Activated CD8-positive, alpha-beta T cell treated with anti-CD3 and anti-CD28 coated beads, Interleukin-2, amount 10 ng/mL, durations not matched to agents 7 days and 5 days (primary cell): ENCODE measurements at regions of chr7 and their contacts with region 1.

Region 1: GRCh38 chr7:2709553-2710285 is 21.7 kb downstream of the AMZ1 start:
- DNase-seq: peak; percentile 88
- ATAC-seq: peak; percentile 91
- H3K4me3 Mint-ChIP-seq: peak overlapping the region; percentile 51
- H3K27ac Mint-ChIP-seq: peak overlapping the region; percentile 63
- H3K4me1 Mint-ChIP-seq: peaks cover 41% of the 10 kb centered on the region
- H3K27me3 Mint-ChIP-seq: peaks cover 29% of the 10 kb centered on the region

Region 2: DNA sequence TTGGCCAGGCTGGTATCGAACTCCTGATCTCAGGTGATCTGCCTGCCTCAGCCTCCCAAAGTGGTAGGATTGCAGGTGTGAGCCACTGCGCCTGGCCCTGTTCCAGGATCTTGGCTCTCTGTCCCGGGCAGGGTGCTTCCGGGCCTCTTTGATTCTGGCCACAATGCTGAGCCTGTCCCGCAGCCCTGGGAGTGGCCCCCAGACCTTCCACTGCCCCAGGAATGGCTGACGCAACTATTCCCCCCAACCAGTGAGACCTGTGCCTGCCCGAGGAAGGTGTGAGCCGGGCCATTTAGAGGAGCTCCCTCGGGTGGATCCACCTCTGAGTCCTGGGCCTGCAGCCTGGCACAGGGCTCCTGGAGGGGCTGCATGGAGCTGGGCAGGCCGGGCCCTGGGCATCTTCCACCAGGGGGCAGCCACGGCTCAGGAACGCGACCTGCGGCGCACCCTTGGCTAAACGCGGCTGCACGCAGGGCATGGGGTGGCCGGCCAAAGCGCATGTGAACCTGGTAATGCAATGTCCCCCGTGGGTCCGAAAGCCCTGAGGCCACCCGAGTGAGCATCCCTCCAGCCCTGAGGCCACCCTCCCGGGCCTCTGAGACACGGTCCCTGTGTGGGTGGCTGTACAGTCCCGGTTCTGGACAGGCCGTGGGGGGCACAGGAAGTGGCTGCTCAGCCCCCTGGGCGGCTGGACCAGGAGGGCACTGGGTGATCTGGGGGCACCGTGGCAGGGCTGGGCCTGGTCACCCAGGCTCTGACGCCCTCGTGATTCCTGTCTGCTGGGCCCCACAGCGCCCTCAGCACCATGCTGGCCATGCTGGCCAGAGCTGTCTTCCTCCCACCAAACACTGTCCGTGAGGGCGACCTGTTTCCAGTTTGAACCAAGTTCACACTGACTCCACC is 258.3 kb before region 1 on chr7:
- CTCF ChIA-PET with region 1: interaction called, 19 read pairs
- POLR2A ChIA-PET with region 1: no interaction called
- DNase-seq: peak; percentile 82
- ATAC-seq: peak; percentile 98
- H3K4me3 Mint-ChIP-seq: peak overlapping the region; percentile 45
- H3K27ac Mint-ChIP-seq: peak overlapping the region; percentile 15
- H3K4me1 Mint-ChIP-seq: peaks cover 15% of the 10 kb centered on the region
- H3K27me3 Mint-ChIP-seq: peaks cover 10% of the 10 kb centered on the region

Region 3: DNA sequence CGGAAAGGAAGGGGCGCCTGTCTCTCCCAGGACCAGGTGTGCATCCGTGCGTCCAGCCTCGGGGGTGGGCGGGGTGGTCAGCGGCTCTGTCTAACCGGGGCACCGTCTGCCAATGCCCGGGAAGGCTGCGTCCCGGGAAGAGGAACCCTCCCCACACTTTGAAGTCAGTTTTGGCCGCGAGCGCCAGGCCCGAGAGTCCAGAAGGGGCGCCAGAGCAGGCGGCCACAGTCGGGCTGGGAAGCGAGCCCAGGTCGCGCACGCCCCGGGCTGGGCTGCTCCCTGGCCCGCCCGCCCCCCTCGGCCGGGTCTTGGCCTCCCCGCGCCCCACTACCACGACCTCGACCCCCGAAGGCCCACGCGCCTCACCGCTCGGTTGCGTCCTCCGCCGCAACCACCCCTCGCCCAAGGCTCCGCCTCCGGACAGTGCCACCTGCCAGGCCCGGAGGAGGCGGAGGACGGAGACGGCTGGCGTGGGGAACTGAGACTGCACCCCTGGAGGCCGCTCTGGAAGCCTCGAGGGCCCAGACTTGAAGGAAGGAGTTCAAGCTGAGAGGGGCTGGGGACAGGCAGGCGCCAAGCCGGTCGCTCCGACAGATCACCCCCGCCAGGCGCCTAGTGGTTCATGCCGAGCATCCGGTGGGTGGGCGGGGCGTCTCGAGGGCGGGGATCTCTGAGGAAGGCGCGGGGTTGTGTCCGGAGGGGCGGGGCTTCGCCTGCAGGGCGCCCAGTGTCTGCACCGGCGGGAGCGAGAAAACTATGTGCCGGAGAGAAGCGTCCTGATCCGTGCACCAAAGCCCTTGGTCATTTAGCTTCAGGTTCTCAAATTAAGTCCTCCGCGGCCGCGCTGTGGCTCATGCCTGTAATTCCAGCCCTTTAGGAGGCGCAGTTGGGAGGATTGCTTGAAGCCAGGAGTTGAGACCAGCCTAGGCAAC is 154.3 kb before region 1 on chr7 and contains the start of gene BRAT1:
- CTCF ChIA-PET with region 1: interaction called, 23 read pairs
- POLR2A ChIA-PET with region 1: no interaction called
- DNase-seq: peak; percentile 98
- ATAC-seq: peak; percentile 88
- H3K4me3 Mint-ChIP-seq: peak within 1 kb of the TSS; percentile 86
- H3K27ac Mint-ChIP-seq: peak within 1 kb of the TSS; percentile 97
- H3K4me1 Mint-ChIP-seq: peaks cover 50% of the 10 kb centered on the region
- H3K27me3 Mint-ChIP-seq: no peaks in the 10 kb centered on the region
- total RNA-seq, gene BRAT1: 39.4 to 40.7 TPM

Region 4: GRCh38 chr7:2632733-2633537 is 76.8 kb before region 1 on chr7:
- CTCF ChIA-PET with region 1: interaction called, 13 read pairs
- POLR2A ChIA-PET with region 1: no interaction called
- DNase-seq: peak; percentile 62
- ATAC-seq: peak; percentile 24
- H3K4me3 Mint-ChIP-seq: peak overlapping the region; percentile 86
- H3K27ac Mint-ChIP-seq: peak overlapping the region; percentile 89
- H3K4me1 Mint-ChIP-seq: peaks cover 20% of the 10 kb centered on the region
- H3K27me3 Mint-ChIP-seq: no peaks in the 10 kb centered on the region

Region 5: DNA sequence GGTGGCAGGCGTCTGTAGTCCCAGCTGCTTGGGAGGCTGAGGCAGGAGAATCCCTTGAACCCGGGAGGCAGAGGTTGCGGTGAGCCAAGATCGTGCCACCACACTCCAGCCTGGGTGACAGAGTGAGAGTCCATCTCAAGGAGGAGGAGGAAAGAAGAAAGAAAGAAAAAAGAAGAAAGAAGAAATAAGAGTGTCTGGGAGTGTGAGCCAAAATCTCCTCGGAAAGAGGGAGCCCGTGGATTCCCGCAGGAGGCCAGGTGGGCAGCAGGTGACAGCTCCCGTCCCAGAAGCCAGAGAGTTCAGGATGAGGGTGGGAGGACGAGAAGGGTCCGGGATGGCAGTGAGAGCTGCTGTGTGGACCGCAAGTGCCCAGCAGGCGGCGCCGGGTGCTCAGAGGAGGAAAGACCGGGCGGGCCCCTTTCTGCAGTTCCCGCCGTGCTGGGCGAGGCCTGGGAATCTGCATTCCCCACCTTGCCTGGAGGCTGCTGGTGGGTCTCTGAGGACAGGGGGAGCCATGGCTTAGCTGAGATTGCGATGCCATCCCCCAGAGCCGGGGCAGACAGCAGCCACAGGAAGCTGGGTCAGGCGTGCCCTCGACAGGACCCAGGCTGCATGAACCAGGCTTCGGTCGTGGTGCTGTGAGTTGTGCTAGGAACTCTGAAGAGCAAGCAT is 38.9 kb before region 1 on chr7:
- CTCF ChIA-PET with region 1: interaction called, 189 read pairs
- POLR2A ChIA-PET with region 1: interaction called, 15 read pairs
- DNase-seq: peak; percentile 78
- ATAC-seq: peak; percentile 91
- H3K4me3 Mint-ChIP-seq: no peak overlapping the region
- H3K27ac Mint-ChIP-seq: no peak overlapping the region
- H3K4me1 Mint-ChIP-seq: peaks cover 11% of the 10 kb centered on the region
- H3K27me3 Mint-ChIP-seq: peaks cover 26% of the 10 kb centered on the region

Region 6: GRCh38 chr7:2688409-2689331 is 21.0 kb before region 1 on chr7:
- CTCF ChIA-PET with region 1: interaction called, 19 read pairs
- POLR2A ChIA-PET with region 1: interaction called, 3 read pairs
- DNase-seq: peak; percentile 30
- ATAC-seq: peak; percentile 38
- H3K4me3 Mint-ChIP-seq: peak overlapping the region; percentile 30
- H3K27ac Mint-ChIP-seq: no peak overlapping the region
- H3K4me1 Mint-ChIP-seq: peaks cover 22% of the 10 kb centered on the region
- H3K27me3 Mint-ChIP-seq: peaks cover 44% of the 10 kb centered on the region

Region 7: GRCh38 chr7:2720582-2721491 is 11.1 kb after region 1 on chr7:
- CTCF ChIA-PET with region 1: interaction called, 39 read pairs
- POLR2A ChIA-PET with region 1: interaction called, 7 read pairs
- DNase-seq: peak; percentile 81
- ATAC-seq: peak; percentile 63
- H3K4me3 Mint-ChIP-seq: no peak overlapping the region
- H3K27ac Mint-ChIP-seq: peak overlapping the region; percentile 27
- H3K4me1 Mint-ChIP-seq: peaks cover 61% of the 10 kb centered on the region
- H3K27me3 Mint-ChIP-seq: peaks cover 3% of the 10 kb centered on the region